ENCODE measurements at regions of chr4 and their contacts with region 1.

Region 1: GRCh38 chr4:104860238-104861123 is 286.2 kb upstream of the TET2 start:
- DNase-seq: peak; percentile 78
- H3K4me3 Mint-ChIP-seq: no peak overlapping the region
- H3K27ac Mint-ChIP-seq: no peak overlapping the region
- H3K4me1 Mint-ChIP-seq: no peaks in the 10 kb centered on the region
- H3K27me3 Mint-ChIP-seq: no peaks in the 10 kb centered on the region
- CTCF ChIP-seq: peak; percentile 87

Region 2: GRCh38 chr4:104015680-104016253 is 844.7 kb before region 1 on chr4:
- CTCF ChIA-PET with region 1: interaction called, 9 read pairs
- POLR2A ChIA-PET with region 1: no interaction called
- intact Hi-C with region 1: loop called (anchors 1 kb)
- DNase-seq: peak; percentile 38
- H3K4me3 Mint-ChIP-seq: no peak overlapping the region
- H3K27ac Mint-ChIP-seq: no peak overlapping the region
- H3K4me1 Mint-ChIP-seq: no peaks in the 10 kb centered on the region
- H3K27me3 Mint-ChIP-seq: no peaks in the 10 kb centered on the region
- CTCF ChIP-seq: peak; percentile 33

Region 3: DNA sequence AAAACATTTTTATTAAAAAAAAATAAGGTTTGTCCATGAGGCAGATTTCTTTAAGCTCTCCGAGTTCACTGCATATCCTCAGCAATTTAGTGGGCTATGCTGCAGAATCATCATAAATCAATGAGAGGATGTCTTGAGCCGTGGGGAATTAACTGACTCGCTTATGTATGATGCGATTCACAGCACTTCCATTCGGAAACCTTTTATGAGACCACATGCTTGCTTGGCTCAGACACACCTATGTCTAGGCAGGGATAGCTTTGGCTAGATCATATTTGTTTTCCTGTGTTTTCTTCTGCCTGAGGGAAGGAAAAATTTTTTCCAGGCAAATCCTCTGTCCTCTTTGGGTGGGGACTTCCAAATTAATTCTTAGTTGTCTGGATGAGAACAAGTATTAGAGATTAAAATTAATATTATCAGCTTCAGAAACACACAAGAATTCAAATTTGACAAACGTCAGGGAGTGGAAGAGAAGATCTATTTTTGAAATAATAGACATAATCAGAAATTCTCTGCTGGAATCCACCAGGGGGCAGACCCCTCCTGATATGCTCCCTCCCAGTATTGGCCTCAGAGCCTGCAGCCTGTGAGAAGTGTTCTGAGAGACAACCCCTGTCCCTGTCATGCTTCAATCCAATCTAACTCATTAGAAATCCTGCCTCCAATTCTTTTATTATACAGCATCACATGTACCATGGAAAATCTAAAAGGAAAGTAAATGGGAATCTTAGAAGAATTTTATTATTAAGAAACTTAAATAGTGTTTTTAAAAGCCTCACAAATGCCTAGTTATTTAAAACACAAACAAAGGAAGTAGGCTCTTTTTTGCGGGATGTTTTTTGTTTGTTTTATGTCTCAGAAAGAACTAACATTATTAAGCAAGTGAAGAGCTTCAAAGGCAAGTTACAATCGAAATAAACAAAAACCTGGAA is 795.6 kb before region 1 on chr4:
- CTCF ChIA-PET with region 1: interaction called, 73 read pairs
- POLR2A ChIA-PET with region 1: no interaction called
- intact Hi-C with region 1: loop called (anchors 1 kb)
- DNase-seq: peak; percentile 72
- H3K4me3 Mint-ChIP-seq: no peak overlapping the region
- H3K27ac Mint-ChIP-seq: peak overlapping the region; percentile 2
- H3K4me1 Mint-ChIP-seq: no peaks in the 10 kb centered on the region
- H3K27me3 Mint-ChIP-seq: no peaks in the 10 kb centered on the region
- CTCF ChIP-seq: peak; percentile 63

Region 4: DNA sequence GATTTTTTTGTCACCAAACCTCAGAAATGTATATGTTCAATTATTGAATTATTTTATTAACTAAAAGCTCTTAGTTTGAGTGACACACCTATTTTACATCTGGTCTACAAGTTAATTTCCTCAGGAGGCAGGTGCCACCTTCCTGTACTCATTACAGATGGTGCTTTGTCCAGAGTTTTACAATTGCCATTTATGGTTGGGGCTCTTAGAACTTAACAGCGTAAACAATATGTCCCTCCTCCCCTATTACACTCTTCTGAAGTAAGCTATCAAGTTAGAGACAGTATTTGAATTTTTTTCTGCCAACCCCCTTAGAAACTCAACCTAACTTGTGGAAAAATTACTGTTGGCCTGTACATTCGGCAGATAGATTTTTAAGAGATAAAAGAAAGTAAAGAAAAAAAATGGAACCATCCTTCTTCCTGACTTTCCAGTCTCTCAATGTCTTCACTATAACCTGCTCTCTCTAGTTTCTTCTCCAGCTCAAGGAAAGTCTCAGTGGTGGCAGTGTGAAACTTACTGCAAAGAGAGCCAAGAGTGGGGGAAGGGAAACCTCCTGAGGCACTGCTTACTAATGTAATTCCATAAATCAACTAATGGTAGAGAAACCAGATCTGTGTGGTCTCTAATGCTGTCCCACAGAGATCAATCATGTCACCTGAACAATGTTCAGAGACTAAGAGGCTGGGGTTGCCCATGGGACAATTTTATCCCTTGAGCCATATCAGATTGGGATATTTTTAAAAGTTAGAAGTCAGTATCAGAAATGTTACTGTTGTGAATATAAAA is 373.6 kb before region 1 on chr4:
- CTCF ChIA-PET with region 1: no interaction called
- POLR2A ChIA-PET with region 1: no interaction called
- intact Hi-C with region 1: no loop called
- DNase-seq: no peak
- H3K4me3 Mint-ChIP-seq: no peak overlapping the region
- H3K27ac Mint-ChIP-seq: no peak overlapping the region
- H3K4me1 Mint-ChIP-seq: peaks cover under 1% of the 10 kb centered on the region
- H3K27me3 Mint-ChIP-seq: no peaks in the 10 kb centered on the region
- CTCF ChIP-seq: no peak

Region 5: GRCh38 chr4:104693599-104694201 is 166.8 kb before region 1 on chr4:
- CTCF ChIA-PET with region 1: interaction called, 3 read pairs
- POLR2A ChIA-PET with region 1: no interaction called
- intact Hi-C with region 1: loop called (anchors 1 kb)
- DNase-seq: peak; percentile 42
- H3K4me3 Mint-ChIP-seq: no peak overlapping the region
- H3K27ac Mint-ChIP-seq: no peak overlapping the region
- H3K4me1 Mint-ChIP-seq: no peaks in the 10 kb centered on the region
- H3K27me3 Mint-ChIP-seq: no peaks in the 10 kb centered on the region
- CTCF ChIP-seq: peak; percentile 27

Region 6: DNA sequence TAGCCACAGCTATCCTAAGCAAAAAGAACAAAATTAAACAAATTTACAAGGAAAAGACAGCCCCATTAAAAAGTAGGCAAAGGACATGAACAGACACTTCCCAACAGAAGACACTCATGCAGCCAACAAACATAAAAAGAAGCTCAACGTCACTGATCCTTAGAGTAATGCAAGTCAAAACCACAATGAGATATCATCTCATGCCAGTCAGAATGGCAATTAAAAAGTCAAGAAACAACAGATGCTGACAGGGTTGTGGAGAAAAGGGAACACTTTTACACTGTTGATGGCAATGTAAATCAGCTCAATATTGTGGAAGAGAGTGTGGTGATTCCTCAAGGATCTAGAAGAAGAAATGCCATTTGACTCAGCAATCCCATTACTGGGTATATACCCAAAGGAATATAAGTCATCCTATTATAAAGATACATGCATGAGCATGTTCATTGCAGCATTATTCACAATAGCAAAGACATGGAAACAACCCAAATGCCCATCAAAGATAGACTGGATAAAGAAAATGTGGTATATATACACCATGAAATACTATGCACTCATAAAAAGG is 123.2 kb after region 1 on chr4:
- CTCF ChIA-PET with region 1: no interaction called
- POLR2A ChIA-PET with region 1: no interaction called
- intact Hi-C with region 1: no loop called
- DNase-seq: no peak
- H3K4me3 Mint-ChIP-seq: no peak overlapping the region
- H3K27ac Mint-ChIP-seq: no peak overlapping the region
- H3K4me1 Mint-ChIP-seq: peaks cover 14% of the 10 kb centered on the region
- H3K27me3 Mint-ChIP-seq: no peaks in the 10 kb centered on the region
- CTCF ChIP-seq: no peak